ENCODE measurements at regions of chr2 and their contacts with region 1.

Region 1: DNA sequence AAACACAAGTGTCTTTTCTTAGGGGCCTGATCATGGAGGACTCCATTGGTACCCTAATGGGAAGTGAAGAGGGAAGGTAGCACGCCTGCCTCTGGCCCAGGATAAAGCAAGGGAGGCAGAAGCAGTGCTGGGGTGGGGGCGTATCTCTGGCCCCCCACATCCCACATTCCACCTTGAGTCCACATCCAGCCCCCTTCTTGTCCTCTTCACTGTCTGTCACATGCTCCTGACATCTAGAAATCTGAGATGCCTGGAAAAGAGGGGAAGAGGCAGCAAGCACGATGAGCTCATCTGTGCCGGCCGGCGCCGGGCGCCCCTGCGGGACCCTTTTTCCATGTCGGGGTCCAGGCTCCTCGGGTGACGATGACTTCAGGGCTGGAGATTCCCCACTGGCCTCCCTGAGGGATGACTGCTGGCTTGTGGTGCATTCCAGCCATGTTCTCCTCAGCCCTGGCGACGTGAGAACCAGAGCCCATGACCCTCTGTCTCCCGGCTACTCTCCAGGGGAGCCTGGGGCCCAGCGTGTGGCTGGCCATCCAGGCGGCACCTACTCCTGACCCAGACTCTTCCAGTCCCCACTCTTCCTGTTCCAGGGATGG is 277.5 kb downstream of the DYSF start:
- DNase-seq: no peak
- H3K4me3 ChIP-seq: no peak overlapping the region
- H3K27ac ChIP-seq: no peak overlapping the region
- H3K4me1 ChIP-seq: no peaks in the 10 kb centered on the region
- H3K27me3 ChIP-seq: no peaks in the 10 kb centered on the region
- CTCF ChIP-seq: no peak
- POLR2A ChIP-seq: no peak

Region 2: DNA sequence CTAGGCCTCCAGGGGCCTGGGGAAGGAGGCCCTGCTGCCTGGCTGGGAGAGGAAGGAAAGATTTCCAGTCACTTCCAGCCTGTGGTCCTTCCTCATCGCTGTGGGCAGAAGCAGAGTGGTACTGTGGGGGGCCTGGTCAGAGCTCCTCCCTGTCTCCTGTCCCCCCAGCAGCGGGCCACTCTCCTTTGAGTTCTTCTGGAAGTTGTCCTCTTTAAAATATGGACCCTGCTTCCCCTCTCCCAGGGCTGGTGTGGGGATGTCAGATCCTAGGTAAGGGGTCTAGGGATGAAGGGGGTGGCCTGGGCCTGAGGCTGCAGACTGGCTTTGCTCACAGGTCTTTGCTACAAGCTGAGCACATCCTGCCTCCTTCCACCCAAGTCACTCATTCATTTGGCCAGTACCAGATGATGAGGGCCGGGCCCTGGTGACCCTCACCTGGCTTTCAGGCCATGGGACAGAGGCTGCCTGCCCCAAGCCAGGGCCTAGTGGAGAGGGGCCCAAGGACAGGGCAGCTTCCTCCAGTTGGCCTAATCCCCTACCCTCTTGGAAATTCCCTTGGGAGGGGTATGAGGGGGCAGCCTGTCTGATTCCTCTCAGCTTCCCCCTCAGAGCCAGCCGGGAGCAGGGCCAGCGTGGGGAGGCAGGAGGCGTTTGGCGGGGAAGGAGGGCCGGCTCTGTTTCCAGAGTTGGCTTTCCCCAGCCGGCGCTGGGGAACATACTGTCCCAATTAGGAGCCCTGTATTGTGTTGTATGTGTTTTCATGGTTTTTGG is 45.6 kb before region 1 on chr2:
- intact Hi-C with region 1: no loop called
- DNase-seq: peak in 1 of 2 donors; percentile 43
- H3K4me3 ChIP-seq: no peak overlapping the region
- H3K27ac ChIP-seq: no peak overlapping the region
- H3K4me1 ChIP-seq: no peaks in the 10 kb centered on the region
- H3K27me3 ChIP-seq: no peaks in the 10 kb centered on the region
- CTCF ChIP-seq: no peak
- POLR2A ChIP-seq: no peak

Region 3: GRCh38 chr2:72338076-72338475 is 607.2 kb after region 1 on chr2:
- intact Hi-C with region 1: loop called (anchors 5 kb)
- DNase-seq: no peak
- H3K4me3 ChIP-seq: no peak overlapping the region
- H3K27ac ChIP-seq: no peak overlapping the region
- H3K4me1 ChIP-seq: no peaks in the 10 kb centered on the region
- H3K27me3 ChIP-seq: no peaks in the 10 kb centered on the region
- CTCF ChIP-seq: no peak
- POLR2A ChIP-seq: no peak

Region 4: DNA sequence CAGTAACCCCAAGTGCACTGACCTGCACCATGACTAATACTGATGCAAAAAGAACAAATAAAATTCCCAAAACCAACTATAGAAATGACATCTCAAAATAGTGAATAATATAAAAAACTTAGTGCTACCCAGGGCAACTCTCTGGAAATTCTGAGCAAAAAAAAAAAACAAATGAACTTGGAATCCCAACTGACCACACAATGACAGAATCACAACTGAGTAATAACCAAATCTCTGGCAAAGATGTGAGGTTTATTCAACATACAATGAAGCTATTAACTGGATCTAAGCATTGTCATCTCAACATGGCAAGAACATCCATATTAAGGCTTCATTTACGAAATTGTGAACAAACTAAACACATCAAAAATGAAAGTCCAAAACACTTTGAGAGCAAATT is 1072.3 kb after region 1 on chr2:
- intact Hi-C with region 1: no loop called
- DNase-seq: no peak
- H3K4me3 ChIP-seq: no peak overlapping the region
- H3K27ac ChIP-seq: no peak overlapping the region
- H3K4me1 ChIP-seq: no peaks in the 10 kb centered on the region
- H3K27me3 ChIP-seq: no peaks in the 10 kb centered on the region
- CTCF ChIP-seq: no peak
- POLR2A ChIP-seq: no peak

Measured in breast epithelium (tissue), 4 donors.